Activated CD8-positive, alpha-beta T cell treated with anti-CD3 and anti-CD28 coated beads, Interleukin-2, amount 10 ng/mL, durations not matched to agents 7 days and 5 days (primary cell): ENCODE measurements at regions of chr1 and their contacts with region 1.

Region 1: DNA sequence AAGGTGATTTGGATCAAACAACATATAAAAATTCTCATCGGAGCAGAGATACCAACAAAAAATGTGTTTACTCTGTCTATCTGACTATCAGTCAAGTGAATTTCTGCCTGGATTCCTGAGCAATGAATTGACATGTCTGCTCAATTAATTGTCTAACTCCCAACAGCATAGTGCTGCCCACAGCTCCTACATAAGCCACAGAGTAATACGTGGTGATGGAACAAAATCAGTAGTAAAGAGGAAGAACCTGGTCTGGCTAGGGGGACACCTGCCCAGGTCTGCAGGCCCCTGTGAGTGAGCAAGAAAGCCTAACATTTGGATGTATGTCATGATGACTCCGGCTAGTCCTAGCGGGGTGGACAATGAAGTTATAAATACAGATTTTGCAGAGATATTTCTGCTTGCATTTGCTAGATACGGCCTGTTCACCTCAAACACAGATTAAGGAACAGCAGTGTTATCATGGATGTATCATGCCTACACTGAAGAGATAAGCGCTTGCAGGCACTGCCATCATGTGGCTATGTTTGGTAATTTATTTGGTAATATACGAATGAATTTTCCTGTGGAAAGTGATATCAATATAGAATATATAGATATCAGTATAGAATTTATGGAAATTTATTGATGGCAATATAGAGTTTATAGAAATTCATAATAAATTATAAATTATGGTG is 69.6 kb upstream of the LRRC8B start:
- DNase-seq: peak; percentile 79
- ATAC-seq: peak; percentile 75
- H3K4me3 Mint-ChIP-seq: no peak overlapping the region
- H3K27ac Mint-ChIP-seq: no peak overlapping the region
- H3K4me1 Mint-ChIP-seq: peaks cover 13% of the 10 kb centered on the region
- H3K27me3 Mint-ChIP-seq: peaks cover 32% of the 10 kb centered on the region

Region 2: DNA sequence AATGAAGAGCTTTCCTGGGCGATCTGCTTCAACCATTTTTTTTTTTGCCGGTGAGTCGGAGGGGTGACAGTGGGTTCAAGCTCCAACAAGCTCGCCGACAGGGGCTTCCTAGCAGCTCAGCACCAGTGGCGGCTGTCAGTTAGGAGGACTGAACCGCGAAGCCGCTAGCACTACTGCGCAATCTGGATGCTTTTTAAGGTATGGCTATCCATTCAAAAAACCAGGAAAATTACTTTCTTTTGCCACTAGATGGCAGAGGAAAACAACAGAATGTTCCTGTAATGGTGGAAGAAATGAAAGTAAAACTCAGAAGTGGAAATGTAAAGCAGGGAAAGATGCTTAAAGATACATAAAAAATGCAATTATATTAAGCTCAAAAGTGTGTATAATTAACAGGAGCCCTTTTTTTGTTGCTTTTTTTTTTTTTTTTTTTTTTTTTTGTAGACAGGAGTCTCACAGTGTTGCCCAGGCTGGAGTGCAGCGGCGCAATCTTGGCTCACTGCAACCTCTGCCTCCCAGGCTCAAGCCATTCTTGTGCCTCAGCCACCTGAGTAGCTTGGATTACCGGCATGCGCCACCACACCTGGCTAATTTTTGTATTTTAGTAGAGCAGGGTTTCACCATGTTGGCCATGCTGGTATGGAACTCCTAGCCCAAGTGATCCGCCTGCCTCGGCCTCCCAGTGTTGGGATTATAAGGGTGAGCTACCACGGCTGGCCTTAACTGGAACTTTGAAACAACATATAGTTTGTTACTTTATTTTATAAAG is 471.0 kb before region 1 on chr1:
- CTCF ChIA-PET with region 1: interaction called, 25 read pairs
- POLR2A ChIA-PET with region 1: interaction called, 3 read pairs
- DNase-seq: peak; percentile 43
- ATAC-seq: peak; percentile 76
- H3K4me3 Mint-ChIP-seq: peak overlapping the region; percentile 48
- H3K27ac Mint-ChIP-seq: peak overlapping the region; percentile 56
- H3K4me1 Mint-ChIP-seq: peaks cover 69% of the 10 kb centered on the region
- H3K27me3 Mint-ChIP-seq: no peaks in the 10 kb centered on the region

Region 3: DNA sequence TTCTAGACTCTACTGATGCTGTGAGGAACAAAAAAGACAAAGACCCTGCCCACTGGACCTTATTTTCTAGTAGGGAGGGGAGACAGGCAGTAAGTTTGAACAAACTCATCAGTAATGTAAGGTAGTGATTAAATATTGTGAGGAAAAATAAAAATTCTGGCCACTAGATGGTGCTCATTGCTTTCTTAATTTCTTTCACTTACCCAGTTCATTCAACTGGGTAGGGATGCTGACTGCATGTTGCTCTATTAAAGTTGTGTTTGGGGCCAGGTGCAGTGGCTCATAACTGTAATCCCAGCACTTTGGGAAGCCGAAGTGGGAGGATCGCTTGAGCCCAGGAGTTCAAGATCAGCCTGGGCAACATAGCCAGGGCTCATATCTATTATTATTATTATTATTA is 456.3 kb before region 1 on chr1:
- CTCF ChIA-PET with region 1: interaction called, 12 read pairs
- POLR2A ChIA-PET with region 1: no interaction called
- DNase-seq: peak; percentile 46
- ATAC-seq: peak; percentile 88
- H3K4me3 Mint-ChIP-seq: no peak overlapping the region
- H3K27ac Mint-ChIP-seq: no peak overlapping the region
- H3K4me1 Mint-ChIP-seq: peaks cover 28% of the 10 kb centered on the region
- H3K27me3 Mint-ChIP-seq: no peaks in the 10 kb centered on the region

Region 4: DNA sequence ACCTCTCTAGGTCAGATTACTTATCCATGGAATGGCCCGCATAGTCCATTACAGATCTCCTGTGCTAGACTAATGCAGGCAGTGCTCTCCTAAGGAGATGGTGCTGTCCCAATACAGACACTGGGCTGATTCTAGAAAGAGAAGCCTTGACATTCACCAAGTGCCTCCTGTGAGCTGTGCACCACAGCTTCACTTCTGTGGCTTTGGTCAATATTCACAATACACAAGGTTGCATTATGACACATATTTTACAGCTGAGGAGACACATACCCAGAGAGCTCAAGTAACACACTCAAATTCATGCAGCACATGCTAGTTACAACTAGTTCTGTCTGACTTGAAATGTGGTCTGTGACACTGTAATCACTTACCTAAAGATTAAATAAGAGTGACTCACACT is 10.2 kb after region 1 on chr1:
- CTCF ChIA-PET with region 1: interaction called, 14 read pairs
- POLR2A ChIA-PET with region 1: no interaction called
- DNase-seq: peak; percentile 38
- ATAC-seq: peak; percentile 67
- H3K4me3 Mint-ChIP-seq: no peak overlapping the region
- H3K27ac Mint-ChIP-seq: no peak overlapping the region
- H3K4me1 Mint-ChIP-seq: peaks cover 35% of the 10 kb centered on the region
- H3K27me3 Mint-ChIP-seq: peaks cover 51% of the 10 kb centered on the region